ENCODE measurements at regions of chr21 and their contacts with region 1.

Region 1: DNA sequence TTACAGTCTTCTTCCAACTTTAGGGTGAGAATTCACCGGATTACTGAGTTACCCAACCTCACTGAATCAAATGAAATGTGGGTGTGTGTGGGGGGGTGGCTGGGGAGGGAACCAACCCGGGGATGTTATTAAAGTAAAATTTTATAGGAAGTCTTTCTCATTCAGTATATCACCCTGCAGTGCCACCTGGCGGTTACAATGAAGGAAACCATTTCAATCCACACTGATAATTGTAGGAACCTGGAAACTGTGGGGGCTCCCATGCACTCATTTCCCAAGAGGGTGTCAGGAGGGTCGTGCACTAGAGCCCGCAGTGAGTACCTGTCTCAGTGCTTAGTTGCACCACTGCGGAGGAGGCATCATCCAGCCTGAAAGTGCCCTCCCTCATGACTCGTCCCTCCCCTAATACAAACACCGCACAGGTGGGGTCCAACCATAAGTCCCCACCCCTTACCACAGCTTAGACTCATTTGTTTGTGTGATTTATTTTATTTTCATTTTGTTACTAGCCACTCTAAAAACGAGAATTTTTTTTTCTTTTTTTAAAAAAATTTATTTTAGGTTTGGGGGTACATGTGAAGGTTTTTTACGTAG is 29.1 kb upstream of the IGSF5 start:
- DNase-seq: peak in 7 of 10 donors; percentile 37 to 75 (median 52)
- H3K4me3 ChIP-seq: no peak overlapping the region
- H3K27ac ChIP-seq: no peak overlapping the region
- H3K27me3 ChIP-seq: peaks cover 0 to 5% (median 0%) of the 10 kb centered on the region in 45 donors
- CTCF ChIP-seq: peak; percentile 63 to 90 (median 78)

Region 2: DNA sequence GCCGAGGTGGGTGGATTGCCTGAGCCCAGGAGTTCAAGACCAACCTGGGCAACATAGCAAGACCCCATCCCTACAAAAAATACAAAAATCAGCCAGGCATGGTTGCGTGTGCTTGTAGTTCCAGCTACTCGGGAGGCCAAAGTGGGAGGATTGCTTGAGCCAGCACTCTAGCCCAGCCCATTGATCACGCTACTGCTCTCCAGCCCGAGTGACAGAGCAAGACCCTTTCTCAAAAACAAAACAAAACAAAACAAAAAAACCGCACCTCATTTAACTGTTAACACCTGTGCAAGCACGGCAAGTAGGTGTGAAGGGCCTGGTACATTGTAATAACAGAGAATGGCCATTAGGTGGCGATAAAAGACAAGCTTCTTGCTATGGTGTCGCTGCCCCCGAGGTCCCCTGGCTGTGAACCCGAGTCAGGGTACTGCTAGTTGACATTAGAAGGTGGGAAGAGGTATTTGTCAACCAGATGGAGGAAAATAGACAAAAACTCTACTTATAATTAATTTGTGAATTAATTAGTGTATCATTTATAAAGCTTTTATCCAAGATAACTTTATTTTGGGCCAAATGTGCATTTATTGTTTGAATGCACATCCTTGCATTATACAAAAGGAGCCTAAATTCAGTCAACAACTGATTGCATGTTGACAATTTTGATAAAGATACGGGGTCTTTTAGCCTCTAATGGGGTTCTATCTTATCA is 197.6 kb before region 1 on chr21:
- intact Hi-C with region 1: loop called (anchors 1 to 5 kb)
- DNase-seq: peak in 4 of 10 donors; percentile 31 to 59 (median 44)
- H3K4me3 ChIP-seq: no peak overlapping the region
- H3K27ac ChIP-seq: no peak overlapping the region
- H3K27me3 ChIP-seq: no peaks in the 10 kb centered on the region
- CTCF ChIP-seq: peak; percentile 79 to 99 (median 93)

Measured in dorsolateral prefrontal cortex (tissue), 120 donors.